ENCODE measurements at regions of chr10 and their contacts with region 1.

Region 1: GRCh38 chr10:6088721-6089390 is at the start of gene RBM17:
- DNase-seq: peak; percentile 93 to 99 (median 98)
- H3K4me3 ChIP-seq: peak within 1 kb of the TSS; percentile 91
- H3K4me3 Mint-ChIP-seq: peak within 1 kb of the TSS; percentile 85 to 96 (median 92)
- H3K27ac ChIP-seq: peak within 1 kb of the TSS; percentile 79
- H3K27ac Mint-ChIP-seq: peak within 1 kb of the TSS; percentile 67 to 94 (median 88)
- H3K4me1 ChIP-seq: peaks cover 50% of the 10 kb centered on the region
- H3K4me1 Mint-ChIP-seq: peaks cover 50 to 63% (median 58%) of the 10 kb centered on the region in 3 donors
- H3K27me3 ChIP-seq: no peaks in the 10 kb centered on the region
- H3K27me3 Mint-ChIP-seq: peaks cover 0 to 3% of the 10 kb centered on the region in 2 donors
- total RNA-seq, gene RBM17: 269 to 282 TPM

Region 2: GRCh38 chr10:6014241-6014761 is 74.6 kb before region 1 on chr10:
- CTCF ChIA-PET with region 1: interaction called, 56 read pairs
- POLR2A ChIA-PET with region 1: interaction called, 12 read pairs
- DNase-seq: peak; percentile 29 to 79 (median 77)
- H3K4me3 ChIP-seq: no peak overlapping the region
- H3K4me3 Mint-ChIP-seq: peak overlapping the region in 5 of 7 donors; percentile 22 to 73 (median 56)
- H3K27ac ChIP-seq: no peak overlapping the region
- H3K27ac Mint-ChIP-seq: peak overlapping the region; percentile 85 to 98 (median 96)
- H3K4me1 ChIP-seq: peaks cover 12% of the 10 kb centered on the region
- H3K4me1 Mint-ChIP-seq: peaks cover 14 to 19% (median 16%) of the 10 kb centered on the region in 3 donors
- H3K27me3 ChIP-seq: no peaks in the 10 kb centered on the region
- H3K27me3 Mint-ChIP-seq: peaks cover under 1 to 3% of the 10 kb centered on the region in 2 donors

Region 3: DNA sequence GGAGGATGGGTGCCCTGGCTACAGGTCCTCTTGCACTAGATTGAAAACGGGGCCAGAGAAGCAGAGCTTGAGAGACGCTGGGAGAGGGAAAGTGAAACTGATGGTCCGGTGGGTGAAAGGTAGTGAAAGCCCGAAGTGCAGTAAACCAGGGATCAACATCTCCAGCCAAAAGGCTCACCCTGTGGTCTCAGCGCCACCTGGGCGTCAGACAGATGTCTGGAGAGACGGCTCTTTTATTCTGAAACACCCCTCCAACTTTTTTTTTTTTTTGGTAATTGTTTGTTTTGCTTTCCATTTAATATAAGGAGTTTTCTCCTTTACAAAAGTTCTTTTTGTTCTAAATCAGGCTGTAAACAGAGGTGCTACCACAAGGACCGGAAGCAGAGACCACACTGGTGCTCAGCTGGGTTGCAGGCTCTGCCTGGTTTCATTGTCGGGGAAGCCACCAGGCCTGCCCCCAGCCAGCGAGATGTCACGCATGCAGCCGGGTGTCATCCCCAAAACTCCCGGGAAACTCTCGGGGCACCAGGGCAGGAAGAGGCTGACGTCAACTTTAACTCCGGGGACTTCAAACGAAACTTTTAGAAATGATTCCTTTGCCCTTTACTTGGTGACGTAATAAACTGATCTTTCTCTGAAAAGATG is 37.9 kb before region 1 on chr10:
- CTCF ChIA-PET with region 1: interaction called, 57 read pairs
- POLR2A ChIA-PET with region 1: interaction called, 15 read pairs
- DNase-seq: peak; percentile 85 to 96 (median 92)
- H3K4me3 ChIP-seq: peak overlapping the region; percentile 80
- H3K4me3 Mint-ChIP-seq: peak overlapping the region; percentile 85 to 98 (median 95)
- H3K27ac ChIP-seq: peak overlapping the region; percentile 66
- H3K27ac Mint-ChIP-seq: peak overlapping the region; percentile 95 to 99 (median 98)
- H3K4me1 ChIP-seq: peaks cover 73% of the 10 kb centered on the region
- H3K4me1 Mint-ChIP-seq: peaks cover 74 to 90% (median 76%) of the 10 kb centered on the region in 3 donors
- H3K27me3 ChIP-seq: no peaks in the 10 kb centered on the region
- H3K27me3 Mint-ChIP-seq: peaks cover 0 to 2% of the 10 kb centered on the region in 2 donors

Region 4: GRCh38 chr10:6068422-6068821 is 20.4 kb before region 1 on chr10:
- CTCF ChIA-PET with region 1: interaction called, 24 read pairs
- POLR2A ChIA-PET with region 1: interaction called, 4 read pairs
- DNase-seq: peak in 2 of 5 donors; percentile 22 to 68
- H3K4me3 ChIP-seq: peak overlapping the region; percentile 33
- H3K4me3 Mint-ChIP-seq: peak overlapping the region in 3 of 7 donors; percentile 15 to 39 (median 24)
- H3K27ac ChIP-seq: no peak overlapping the region
- H3K27ac Mint-ChIP-seq: no peak overlapping the region
- H3K4me1 ChIP-seq: peaks cover 72% of the 10 kb centered on the region
- H3K4me1 Mint-ChIP-seq: peaks cover 40 to 78% (median 66%) of the 10 kb centered on the region in 3 donors
- H3K27me3 ChIP-seq: no peaks in the 10 kb centered on the region
- H3K27me3 Mint-ChIP-seq: peaks cover under 1 to 8% of the 10 kb centered on the region in 2 donors

Measured in CD8-positive, alpha-beta memory T cell (primary cell).